ENCODE measurements at regions of chr12 and their contacts with region 1.

Region 1: DNA sequence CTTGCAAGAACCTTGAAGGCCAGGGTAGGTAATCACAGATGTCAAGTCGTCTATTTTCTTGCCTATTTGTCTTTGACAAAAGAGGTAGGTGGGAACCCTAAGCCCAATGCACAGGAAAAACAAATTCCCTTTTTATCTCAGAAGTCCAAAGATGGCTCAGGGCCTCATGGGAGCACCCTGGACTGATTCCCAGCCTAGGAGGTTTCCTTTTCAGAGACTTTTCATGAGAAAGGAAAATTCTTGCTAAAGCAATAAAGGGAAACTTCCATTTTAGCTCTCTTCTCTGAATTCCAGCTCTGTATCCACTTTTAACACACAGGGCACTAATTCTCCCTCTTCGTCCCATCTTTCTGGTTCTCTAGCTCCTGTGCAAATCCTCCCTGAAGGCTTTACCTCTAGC is 1.2 kb downstream of the ZNF641 start:
- DNase-seq: no peak
- H3K4me3 ChIP-seq: peak overlapping the region; percentile 74 to 81 (median 74)
- H3K27ac ChIP-seq: peak overlapping the region; percentile 94 to 96 (median 94)
- H3K4me1 ChIP-seq: peaks cover 15 to 36% (median 29%) of the 10 kb centered on the region in 4 donors
- H3K27me3 ChIP-seq: no peaks in the 10 kb centered on the region
- CTCF ChIP-seq: no peak
- EP300 ChIP-seq: no peak
- POLR2A ChIP-seq: no peak

Region 2: GRCh38 chr12:47630316-47630715 is 719.2 kb before region 1 on chr12:
- intact Hi-C with region 1: no loop called
- DNase-seq: no peak
- H3K4me3 ChIP-seq: no peak overlapping the region
- H3K27ac ChIP-seq: no peak overlapping the region
- H3K4me1 ChIP-seq: no peaks in the 10 kb centered on the region
- H3K27me3 ChIP-seq: no peaks in the 10 kb centered on the region
- CTCF ChIP-seq: no peak
- EP300 ChIP-seq: no peak
- POLR2A ChIP-seq: no peak

Region 3: DNA sequence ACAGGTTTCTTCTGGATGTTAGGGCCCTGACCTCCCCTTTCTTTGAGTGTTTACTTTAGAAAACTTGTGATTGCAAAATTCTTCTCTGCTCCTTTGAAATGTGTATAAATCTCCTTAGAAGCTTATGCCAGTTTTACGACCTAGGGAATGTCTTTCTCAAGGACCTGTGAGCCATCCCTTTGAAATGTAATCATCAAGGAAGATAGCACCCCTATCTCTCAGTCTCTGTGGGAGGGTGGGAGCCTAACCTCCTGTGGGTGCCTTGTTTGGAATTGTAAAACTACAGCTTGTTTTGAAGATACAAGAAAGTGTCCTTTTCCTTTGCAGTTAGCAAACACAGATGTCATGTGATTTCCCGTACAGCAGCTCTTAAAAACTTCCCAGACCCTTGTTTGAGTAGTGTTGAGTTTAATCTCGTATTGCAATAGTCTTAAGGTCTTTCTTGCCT is 149.7 kb before region 1 on chr12:
- intact Hi-C with region 1: loop called (anchors 5 kb)
- DNase-seq: peak; percentile 86
- H3K4me3 ChIP-seq: no peak overlapping the region
- H3K27ac ChIP-seq: peak overlapping the region; percentile 91 to 97 (median 95)
- H3K4me1 ChIP-seq: peaks cover 19 to 25% (median 23%) of the 10 kb centered on the region in 4 donors
- H3K27me3 ChIP-seq: no peaks in the 10 kb centered on the region
- CTCF ChIP-seq: no peak
- EP300 ChIP-seq: no peak
- POLR2A ChIP-seq: no peak

Measured in esophagus muscularis mucosa (tissue), 4 donors.